Mammary epithelial cell (primary cell): ENCODE measurements at regions of chr7 and their contacts with region 1.

Region 1: GRCh38 chr7:129091484-129092002 is 36.6 kb upstream of the TNPO3 start:
- DNase-seq: peak; percentile 52
- H3K4me3 ChIP-seq: no peak overlapping the region
- H3K27ac ChIP-seq: no peak overlapping the region
- H3K4me1 ChIP-seq: no peaks in the 10 kb centered on the region
- H3K27me3 ChIP-seq: no peaks in the 10 kb centered on the region
- CTCF ChIP-seq: peak; percentile 98 to 100

Region 2: GRCh38 chr7:128904381-128905197 is 187.0 kb before region 1 on chr7:
- CTCF ChIA-PET with region 1: no interaction called
- dilution Hi-C with region 1: no loop called
- in situ Hi-C with region 1: loop called in 1 of 2 experiments (anchors 10 kb)
- intact Hi-C with region 1: loop called (anchors 1 kb)
- DNase-seq: peak; percentile 48
- H3K4me3 ChIP-seq: no peak overlapping the region
- H3K27ac ChIP-seq: no peak overlapping the region
- H3K4me1 ChIP-seq: peaks cover 15% of the 10 kb centered on the region
- H3K27me3 ChIP-seq: peaks cover 2% of the 10 kb centered on the region
- CTCF ChIP-seq: peak; percentile 70 to 72

Region 3: GRCh38 chr7:128940494-128941322 is 150.8 kb before region 1 on chr7:
- CTCF ChIA-PET with region 1: no interaction called
- dilution Hi-C with region 1: loop called (anchors 10 kb)
- in situ Hi-C with region 1: no loop called
- intact Hi-C with region 1: no loop called
- DNase-seq: no peak
- H3K4me3 ChIP-seq: no peak overlapping the region
- H3K27ac ChIP-seq: no peak overlapping the region
- H3K4me1 ChIP-seq: peaks cover 12% of the 10 kb centered on the region
- H3K27me3 ChIP-seq: no peaks in the 10 kb centered on the region
- CTCF ChIP-seq: no peak

Region 4: DNA sequence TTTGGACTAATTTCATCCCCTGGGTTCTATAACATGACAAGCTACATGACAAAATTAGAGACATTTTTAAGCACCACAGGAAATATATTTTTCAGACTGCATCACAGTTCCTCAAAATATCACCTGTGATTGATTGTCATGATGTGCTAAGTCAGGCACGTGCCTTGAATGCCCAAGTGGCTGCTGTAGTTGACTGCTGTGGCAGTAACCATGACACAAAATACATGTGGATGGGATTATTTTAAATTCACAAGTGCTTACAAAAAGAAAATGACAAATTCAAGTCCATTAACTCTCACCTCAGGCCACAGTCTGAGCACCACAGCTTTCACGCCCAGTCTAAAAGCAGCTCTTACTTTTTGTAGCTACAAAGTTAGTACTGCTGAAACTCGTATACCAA is 82.1 kb before region 1 on chr7:
- CTCF ChIA-PET with region 1: no interaction called
- dilution Hi-C with region 1: no loop called
- in situ Hi-C with region 1: no loop called
- intact Hi-C with region 1: loop called (anchors 5 kb)
- DNase-seq: no peak
- H3K4me3 ChIP-seq: no peak overlapping the region
- H3K27ac ChIP-seq: no peak overlapping the region
- H3K4me1 ChIP-seq: no peaks in the 10 kb centered on the region
- H3K27me3 ChIP-seq: no peaks in the 10 kb centered on the region
- CTCF ChIP-seq: no peak

Region 5: DNA sequence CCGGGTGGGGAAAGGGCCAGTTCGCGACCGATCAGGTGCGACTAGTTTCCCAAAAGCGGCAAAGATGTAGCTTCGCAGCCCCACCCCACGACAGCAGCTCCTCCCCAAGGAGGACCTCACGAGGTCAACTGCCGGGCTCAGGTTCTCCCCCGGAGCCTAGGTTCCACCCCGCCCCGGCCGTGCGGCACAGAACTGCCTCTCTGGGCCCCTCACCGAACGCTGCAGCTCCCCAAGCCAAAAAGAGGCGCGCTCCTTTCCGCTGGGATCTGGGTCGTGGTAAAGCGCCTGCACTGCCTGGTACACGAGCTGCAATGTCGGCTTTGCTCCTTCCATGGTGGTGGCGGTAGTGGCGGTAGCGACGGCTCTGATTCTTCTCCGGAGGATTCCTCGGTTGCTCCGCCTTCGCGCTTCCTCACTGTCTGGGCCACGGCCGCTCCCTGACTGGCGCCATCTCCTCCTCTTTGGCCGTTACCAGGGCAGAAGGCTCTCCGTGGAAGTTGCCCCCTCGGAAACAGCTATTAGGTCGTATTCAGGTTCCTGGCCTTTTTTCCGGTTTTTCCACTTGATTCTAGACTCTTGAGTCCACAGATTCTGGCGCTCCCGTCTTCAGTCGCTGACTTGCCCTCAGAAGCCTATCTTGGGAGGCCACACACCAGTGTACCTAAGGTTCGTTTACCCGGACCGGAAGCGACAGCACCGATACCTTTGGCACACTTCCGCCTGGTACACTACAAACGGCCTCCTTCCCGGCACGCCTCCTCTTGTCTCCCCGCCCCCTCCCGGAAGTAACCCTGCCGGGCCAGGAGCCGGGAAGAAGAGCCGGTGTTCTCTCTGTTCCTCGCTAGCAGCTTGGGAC is 36.9 kb before region 1 on chr7 and contains the start of gene TNPO3:
- CTCF ChIA-PET with region 1: no interaction called
- dilution Hi-C with region 1: no loop called
- in situ Hi-C with region 1: no loop called
- intact Hi-C with region 1: loop called (anchors 1 kb)
- DNase-seq: peak; percentile 90
- H3K4me3 ChIP-seq: peak within 1 kb of the TSS; percentile 77 to 97 (median 79)
- H3K27ac ChIP-seq: peak within 1 kb of the TSS; percentile 90
- H3K4me1 ChIP-seq: peaks cover 7% of the 10 kb centered on the region
- H3K27me3 ChIP-seq: no peaks in the 10 kb centered on the region
- CTCF ChIP-seq: peak in 1 of 2 donors; percentile 12
- total RNA-seq, gene TNPO3: 40.4 to 56.8 TPM

Region 6: GRCh38 chr7:129072479-129073011 is 19.0 kb before region 1 on chr7:
- CTCF ChIA-PET with region 1: no interaction called
- dilution Hi-C with region 1: no loop called
- in situ Hi-C with region 1: no loop called
- intact Hi-C with region 1: no loop called
- DNase-seq: no peak
- H3K4me3 ChIP-seq: no peak overlapping the region
- H3K27ac ChIP-seq: no peak overlapping the region
- H3K4me1 ChIP-seq: no peaks in the 10 kb centered on the region
- H3K27me3 ChIP-seq: peaks cover 4% of the 10 kb centered on the region
- CTCF ChIP-seq: no peak

Region 7: DNA sequence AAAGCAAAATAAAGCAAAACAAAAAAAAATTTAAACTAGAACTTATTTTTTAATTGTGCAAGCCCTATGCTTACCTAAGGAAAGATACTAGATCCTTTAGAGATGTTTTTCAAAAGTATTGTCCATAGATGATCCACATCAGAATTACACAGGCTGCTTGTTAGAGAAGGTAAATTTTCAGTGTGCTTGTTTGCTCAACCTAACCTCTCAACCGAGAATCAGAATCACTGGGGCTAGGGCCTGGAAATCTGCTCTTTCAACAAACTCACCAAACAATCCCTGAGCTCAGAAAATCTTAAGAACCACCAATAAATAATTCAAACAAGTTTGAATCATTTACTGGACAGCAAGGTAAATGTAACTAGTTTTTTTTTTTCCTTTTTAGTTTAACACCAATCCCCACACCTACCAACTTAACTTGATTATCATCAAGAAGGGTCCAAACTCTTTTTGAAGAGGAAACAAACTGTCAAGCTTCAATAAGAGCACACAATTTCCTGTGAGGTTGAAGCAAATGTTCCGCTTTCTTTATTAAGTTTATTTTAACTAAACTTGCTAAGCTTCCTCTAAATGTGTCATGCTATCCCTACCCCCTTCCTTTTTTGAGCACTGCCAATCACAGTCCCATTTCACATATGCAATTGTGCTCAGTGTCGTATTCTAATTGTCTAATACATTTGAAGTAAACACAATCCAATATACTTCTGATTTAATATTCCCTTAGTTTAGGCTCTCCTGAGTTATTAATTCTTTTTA is 45.5 kb after region 1 on chr7:
- CTCF ChIA-PET with region 1: no interaction called
- dilution Hi-C with region 1: no loop called
- in situ Hi-C with region 1: no loop called
- intact Hi-C with region 1: no loop called
- DNase-seq: no peak
- H3K4me3 ChIP-seq: no peak overlapping the region
- H3K27ac ChIP-seq: no peak overlapping the region
- H3K4me1 ChIP-seq: no peaks in the 10 kb centered on the region
- H3K27me3 ChIP-seq: no peaks in the 10 kb centered on the region
- CTCF ChIP-seq: no peak

Region 8: GRCh38 chr7:129308047-129308446 is 216.5 kb after region 1 on chr7:
- CTCF ChIA-PET with region 1: no interaction called
- dilution Hi-C with region 1: no loop called
- in situ Hi-C with region 1: no loop called
- intact Hi-C with region 1: no loop called
- DNase-seq: peak; percentile 91
- H3K4me3 ChIP-seq: no peak overlapping the region
- H3K27ac ChIP-seq: peak overlapping the region; percentile 85
- H3K4me1 ChIP-seq: peaks cover 28% of the 10 kb centered on the region
- H3K27me3 ChIP-seq: no peaks in the 10 kb centered on the region
- CTCF ChIP-seq: peak in 1 of 2 donors; percentile 15